Activated naive CD4-positive, alpha-beta T cell treated with anti-CD3 and anti-CD28 coated beads for 36 hours (primary cell): ENCODE measurements at regions of chr6 and their contacts with region 1.

Region 1: DNA sequence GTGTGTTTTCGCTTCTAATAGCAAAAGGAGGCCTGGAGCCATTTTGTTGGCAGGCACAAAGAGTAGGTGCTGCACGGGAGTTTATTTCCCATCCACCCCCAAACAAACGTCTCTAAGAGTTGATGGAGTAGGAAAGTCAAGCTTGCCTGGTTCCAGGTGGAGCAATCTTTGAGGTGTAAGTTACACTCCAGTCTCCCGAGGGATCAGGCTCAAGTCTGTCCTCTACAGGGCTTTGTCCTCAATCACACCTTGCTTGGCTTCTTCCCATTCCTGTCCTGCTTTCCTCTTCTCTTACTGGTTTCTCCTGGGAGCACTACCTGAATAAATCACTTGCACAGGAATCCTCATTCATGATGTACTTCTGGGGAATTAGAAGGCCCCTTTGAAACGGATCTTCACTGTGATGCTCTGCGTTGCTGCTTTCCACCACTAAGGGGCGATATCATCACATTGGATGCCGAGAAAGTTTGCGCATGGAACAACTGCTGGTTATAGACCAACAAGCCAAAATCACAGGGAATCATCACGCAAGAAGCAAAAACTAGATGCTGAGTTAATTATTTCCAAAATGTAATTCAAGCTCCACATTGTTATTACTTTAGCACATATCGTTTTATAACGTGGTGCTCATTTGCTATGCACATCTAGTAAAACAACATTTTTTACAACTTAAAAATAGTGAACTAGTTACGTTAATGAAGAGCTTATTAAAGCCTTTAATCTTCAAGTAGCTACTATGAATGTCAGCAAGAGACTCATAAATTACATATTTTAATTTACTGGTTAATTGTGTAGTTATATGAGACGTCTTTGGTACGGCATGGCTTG is 156.8 kb downstream of the DNAH8 start:
- DNase-seq: peak; percentile 82
- H3K4me3 Mint-ChIP-seq: no peak overlapping the region
- H3K27ac Mint-ChIP-seq: no peak overlapping the region
- H3K4me1 Mint-ChIP-seq: peaks cover 32% of the 10 kb centered on the region
- H3K27me3 Mint-ChIP-seq: no peaks in the 10 kb centered on the region

Region 2: DNA sequence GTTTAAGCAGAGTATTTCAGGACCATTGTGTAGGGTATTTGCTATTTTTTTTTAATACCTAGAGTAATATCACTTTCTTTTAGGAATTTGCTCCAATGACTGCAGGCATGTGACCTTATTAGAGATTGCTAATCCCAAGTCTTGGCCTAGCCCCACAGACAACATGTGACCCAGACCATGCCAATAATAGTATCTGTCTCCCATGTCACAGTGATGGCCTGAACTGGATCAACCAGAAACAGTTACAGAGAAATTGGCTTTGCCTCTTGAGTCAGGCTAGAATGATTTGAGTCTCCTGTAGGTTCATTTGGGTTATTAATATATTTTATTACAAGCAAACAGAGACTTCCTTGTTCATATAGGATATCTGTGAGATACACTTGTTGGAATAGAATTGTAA is 40.1 kb before region 1 on chr6:
- CTCF ChIA-PET with region 1: no interaction called
- intact Hi-C with region 1: no loop called
- DNase-seq: no peak
- H3K4me3 Mint-ChIP-seq: no peak overlapping the region
- H3K27ac Mint-ChIP-seq: no peak overlapping the region
- H3K4me1 Mint-ChIP-seq: no peaks in the 10 kb centered on the region
- H3K27me3 Mint-ChIP-seq: peaks cover 15% of the 10 kb centered on the region

Region 3: GRCh38 chr6:38860041-38860440 is 11.9 kb before region 1 on chr6:
- CTCF ChIA-PET with region 1: no interaction called
- intact Hi-C with region 1: no loop called
- DNase-seq: no peak
- H3K4me3 Mint-ChIP-seq: no peak overlapping the region
- H3K27ac Mint-ChIP-seq: no peak overlapping the region
- H3K4me1 Mint-ChIP-seq: no peaks in the 10 kb centered on the region
- H3K27me3 Mint-ChIP-seq: peaks cover 2% of the 10 kb centered on the region

Region 4: GRCh38 chr6:38909015-38909730 is 37.2 kb after region 1 on chr6:
- CTCF ChIA-PET with region 1: interaction called, 20 read pairs
- intact Hi-C with region 1: no loop called
- DNase-seq: no peak
- H3K4me3 Mint-ChIP-seq: no peak overlapping the region
- H3K27ac Mint-ChIP-seq: no peak overlapping the region
- H3K4me1 Mint-ChIP-seq: no peaks in the 10 kb centered on the region
- H3K27me3 Mint-ChIP-seq: no peaks in the 10 kb centered on the region

Region 5: DNA sequence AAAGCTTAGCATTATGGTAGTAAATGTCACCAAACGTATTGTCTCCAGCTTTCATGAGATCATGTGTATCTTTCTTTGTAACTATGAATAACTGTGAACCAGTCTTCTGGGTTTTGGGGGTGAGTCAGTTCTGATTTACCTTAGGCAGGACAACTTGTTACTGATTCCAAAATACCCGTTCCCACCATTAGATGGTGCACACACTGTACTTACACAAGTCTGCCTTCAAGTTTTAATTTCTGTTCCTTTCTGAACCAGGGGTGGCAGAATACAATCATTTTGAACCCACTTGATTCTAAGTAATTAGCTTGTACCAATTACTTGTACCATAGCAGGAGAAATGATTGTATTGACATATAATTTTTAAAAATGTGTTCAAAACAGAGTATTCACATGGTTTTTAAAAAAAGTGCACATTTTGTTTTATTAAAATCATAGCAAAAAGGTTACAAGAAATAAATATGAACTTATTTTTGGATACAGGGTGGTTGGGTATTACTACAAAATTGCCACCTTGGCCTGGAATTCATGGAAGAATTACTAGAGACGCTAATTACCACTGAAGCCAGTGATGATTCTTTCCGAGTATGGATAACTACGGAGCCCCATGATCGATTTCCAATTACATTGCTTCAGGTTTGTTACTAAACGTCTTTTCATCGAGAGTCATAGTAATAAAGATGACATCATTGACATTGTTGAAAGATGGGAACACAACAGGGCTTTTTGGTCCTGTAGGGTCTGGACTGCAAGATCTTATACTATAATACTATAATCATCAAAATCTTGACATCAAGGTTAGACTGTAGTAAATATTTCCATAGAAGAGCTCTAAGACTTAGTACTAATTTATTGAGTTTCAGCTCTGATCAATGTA is 101.5 kb after region 1 on chr6:
- CTCF ChIA-PET with region 1: interaction called, 23 read pairs
- intact Hi-C with region 1: loop called (anchors 1 kb)
- DNase-seq: peak; percentile 60
- H3K4me3 Mint-ChIP-seq: no peak overlapping the region
- H3K27ac Mint-ChIP-seq: no peak overlapping the region
- H3K4me1 Mint-ChIP-seq: no peaks in the 10 kb centered on the region
- H3K27me3 Mint-ChIP-seq: no peaks in the 10 kb centered on the region

Region 6: DNA sequence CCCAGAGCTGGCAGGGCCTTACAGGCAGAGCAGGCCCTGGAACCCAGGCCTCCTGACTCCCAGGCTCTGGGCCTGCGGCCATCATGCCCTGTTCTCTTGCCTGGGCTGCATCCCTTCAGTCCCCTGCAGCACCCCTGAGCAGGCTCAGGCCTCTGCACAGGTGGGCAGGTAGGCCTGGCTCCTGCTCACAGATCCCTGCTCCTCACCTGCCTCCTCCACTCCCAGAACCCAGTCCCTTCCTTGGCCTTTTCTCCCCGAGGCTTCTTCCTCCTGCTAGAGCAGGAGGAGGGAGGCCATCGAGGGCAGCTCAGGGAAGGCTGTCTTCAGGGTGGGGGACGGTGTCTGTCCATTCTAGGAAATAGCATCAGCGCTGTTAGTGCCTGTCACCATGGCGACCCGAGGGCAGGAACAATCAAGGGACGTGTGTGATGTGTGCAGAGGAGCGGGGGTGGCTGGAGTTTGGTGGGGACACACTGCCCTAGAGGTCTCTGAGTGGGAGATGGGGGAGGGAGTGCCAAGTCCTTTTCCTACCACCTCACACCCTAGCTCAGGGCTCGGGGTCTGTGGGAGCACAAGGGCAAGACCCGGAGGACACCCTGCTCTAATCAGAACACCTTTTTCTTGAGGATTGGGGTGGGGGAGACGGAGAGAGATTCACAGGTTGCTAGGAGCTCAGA is 203.2 kb after region 1 on chr6:
- CTCF ChIA-PET with region 1: no interaction called
- intact Hi-C with region 1: no loop called
- DNase-seq: no peak
- H3K4me3 Mint-ChIP-seq: no peak overlapping the region
- H3K27ac Mint-ChIP-seq: no peak overlapping the region
- H3K4me1 Mint-ChIP-seq: no peaks in the 10 kb centered on the region
- H3K27me3 Mint-ChIP-seq: no peaks in the 10 kb centered on the region

Region 7: GRCh38 chr6:39088331-39088730 is 216.4 kb after region 1 on chr6:
- CTCF ChIA-PET with region 1: no interaction called
- intact Hi-C with region 1: no loop called
- DNase-seq: peak; percentile 45
- H3K4me3 Mint-ChIP-seq: no peak overlapping the region
- H3K27ac Mint-ChIP-seq: no peak overlapping the region
- H3K4me1 Mint-ChIP-seq: peaks cover 3% of the 10 kb centered on the region
- H3K27me3 Mint-ChIP-seq: peaks cover 33% of the 10 kb centered on the region

Region 8: GRCh38 chr6:39114704-39115599 is 243.0 kb after region 1 on chr6 and contains the start of gene SAYSD1:
- CTCF ChIA-PET with region 1: interaction called, 3 read pairs
- intact Hi-C with region 1: loop called (anchors 1 kb)
- DNase-seq: peak; percentile 94
- H3K4me3 Mint-ChIP-seq: peak within 1 kb of the TSS; percentile 93
- H3K27ac Mint-ChIP-seq: peak within 1 kb of the TSS; percentile 95
- H3K4me1 Mint-ChIP-seq: peaks cover 56% of the 10 kb centered on the region
- H3K27me3 Mint-ChIP-seq: no peaks in the 10 kb centered on the region
- total RNA-seq, gene SAYSD1: 13.7 to 13.8 TPM

Region 9: GRCh38 chr6:39309942-39310531 is 438.1 kb after region 1 on chr6:
- CTCF ChIA-PET with region 1: interaction called, 27 read pairs
- intact Hi-C with region 1: loop called (anchors 1 kb)
- DNase-seq: peak; percentile 75
- H3K4me3 Mint-ChIP-seq: no peak overlapping the region
- H3K27ac Mint-ChIP-seq: no peak overlapping the region
- H3K4me1 Mint-ChIP-seq: peaks cover 7% of the 10 kb centered on the region
- H3K27me3 Mint-ChIP-seq: peaks cover 30% of the 10 kb centered on the region